ENCODE measurements at regions of chr12 and their contacts with region 1.

Region 1: DNA sequence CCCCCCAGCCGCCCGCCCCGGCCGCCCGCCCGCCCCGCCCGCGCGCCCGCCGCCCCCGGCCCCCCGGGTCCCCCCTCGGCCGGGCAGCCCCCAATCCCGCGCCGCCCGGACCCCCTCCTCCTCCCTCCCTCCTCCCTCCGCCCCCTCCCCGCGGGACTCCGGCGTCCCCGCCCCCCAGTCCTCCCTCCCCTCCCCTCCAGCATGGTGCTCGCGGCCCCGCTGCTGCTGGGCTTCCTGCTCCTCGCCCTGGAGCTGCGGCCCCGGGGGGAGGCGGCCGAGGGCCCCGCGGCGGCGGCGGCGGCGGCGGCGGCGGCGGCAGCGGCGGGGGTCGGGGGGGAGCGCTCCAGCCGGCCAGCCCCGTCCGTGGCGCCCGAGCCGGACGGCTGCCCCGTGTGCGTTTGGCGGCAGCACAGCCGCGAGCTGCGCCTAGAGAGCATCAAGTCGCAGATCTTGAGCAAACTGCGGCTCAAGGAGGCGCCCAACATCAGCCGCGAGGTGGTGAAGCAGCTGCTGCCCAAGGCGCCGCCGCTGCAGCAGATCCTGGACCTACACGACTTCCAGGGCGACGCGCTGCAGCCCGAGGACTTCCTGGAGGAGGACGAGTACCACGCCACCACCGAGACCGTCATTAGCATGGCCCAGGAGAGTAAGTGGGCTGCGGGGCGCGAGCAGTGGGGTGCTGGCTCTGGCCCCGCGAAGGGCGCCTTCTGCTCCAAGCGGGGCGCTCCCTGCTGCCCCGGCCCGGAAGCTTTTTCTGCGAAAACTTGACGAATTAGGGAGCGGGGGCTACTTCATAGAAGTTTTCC is at the start of gene GDF11:
- DNase-seq: peak; percentile 87
- total RNA-seq, gene GDF11: 8.4 to 11.0 TPM

Region 2: DNA sequence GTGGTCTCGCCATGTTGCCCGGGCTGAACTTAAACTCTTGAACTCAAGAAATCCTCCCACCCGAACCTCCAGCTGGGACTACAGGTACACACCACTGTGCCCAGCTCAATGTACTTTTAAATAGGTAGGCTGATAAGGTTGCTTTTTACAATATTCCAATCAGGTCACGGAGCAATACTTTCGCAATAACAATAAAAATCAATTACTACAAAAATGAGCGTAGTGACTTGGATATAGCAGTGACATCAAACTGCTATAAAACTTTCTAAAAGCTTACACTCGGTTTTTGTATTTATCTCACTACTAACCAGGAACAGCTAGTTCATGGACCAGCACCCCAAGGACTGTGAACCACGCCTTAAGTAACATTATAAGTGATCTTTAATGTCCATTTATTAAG is 63.7 kb after region 1 on chr12:
- intact Hi-C with region 1: loop called in 1 of 2 experiments (anchors 5 kb)
- DNase-seq: no peak

Measured in posterior vena cava (tissue), 2 donors.